Activated CD4-positive, alpha-beta T cell treated with anti-CD3 and anti-CD28 coated beads for 36 hours (primary cell): ENCODE measurements at regions of chr20 and their contacts with region 1.

Region 1: DNA sequence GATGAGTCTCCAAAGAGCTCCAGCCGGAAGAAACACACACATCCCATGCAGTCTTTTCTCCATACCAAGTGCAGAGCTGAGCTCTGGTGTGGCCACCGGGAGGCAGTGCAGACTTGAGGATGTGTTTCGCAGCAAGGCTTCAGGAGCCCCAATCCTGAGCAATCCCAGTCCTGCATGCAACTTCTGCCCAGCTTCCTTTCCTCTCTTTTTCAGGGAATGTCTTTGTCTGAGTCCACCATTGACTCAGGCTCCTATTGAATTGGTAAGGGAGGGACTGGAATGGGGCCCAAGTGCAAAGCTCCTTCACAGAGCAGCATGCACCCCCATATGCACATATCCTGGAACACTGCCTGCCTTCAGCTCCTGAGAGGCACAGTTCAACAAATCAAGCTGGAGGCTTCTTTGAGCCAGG is 50.5 kb upstream of the ASIP start:
- DNase-seq: peak; percentile 73
- ATAC-seq: peak; percentile 74
- H3K4me3 Mint-ChIP-seq: no peak overlapping the region
- H3K27ac Mint-ChIP-seq: no peak overlapping the region
- H3K4me1 Mint-ChIP-seq: no peaks in the 10 kb centered on the region
- H3K27me3 Mint-ChIP-seq: peaks cover 9% of the 10 kb centered on the region

Region 2: DNA sequence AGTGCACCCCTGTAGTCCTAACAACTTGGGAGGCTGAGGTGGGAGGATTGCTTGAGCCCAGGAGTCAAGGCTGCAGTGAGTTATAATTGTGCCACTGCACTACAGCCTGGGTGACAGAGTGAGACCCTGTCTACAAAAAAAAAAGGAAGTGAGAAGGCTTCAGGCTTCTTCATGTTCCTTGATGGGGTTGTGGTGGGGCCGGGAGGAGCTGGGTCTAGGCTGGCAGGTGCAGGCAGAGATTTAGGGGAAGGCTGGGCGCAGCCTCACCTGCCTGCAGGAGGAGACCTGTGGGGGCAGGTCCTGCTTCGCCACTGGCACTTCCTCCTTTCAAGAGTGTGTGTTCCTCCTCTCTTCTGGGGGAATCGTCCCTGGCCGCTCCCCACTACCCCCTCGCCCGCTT is 315.6 kb before region 1 on chr20:
- CTCF ChIA-PET with region 1: no interaction called
- POLR2A ChIA-PET with region 1: no interaction called
- intact Hi-C with region 1: no loop called
- DNase-seq: no peak
- ATAC-seq: no peak
- H3K4me3 Mint-ChIP-seq: no peak overlapping the region
- H3K27ac Mint-ChIP-seq: no peak overlapping the region
- H3K4me1 Mint-ChIP-seq: no peaks in the 10 kb centered on the region
- H3K27me3 Mint-ChIP-seq: no peaks in the 10 kb centered on the region

Region 3: GRCh38 chr20:34141294-34141693 is 49.4 kb before region 1 on chr20:
- CTCF ChIA-PET with region 1: no interaction called
- POLR2A ChIA-PET with region 1: no interaction called
- intact Hi-C with region 1: no loop called
- DNase-seq: no peak
- ATAC-seq: no peak
- H3K4me3 Mint-ChIP-seq: no peak overlapping the region
- H3K27ac Mint-ChIP-seq: no peak overlapping the region
- H3K4me1 Mint-ChIP-seq: no peaks in the 10 kb centered on the region
- H3K27me3 Mint-ChIP-seq: peaks cover 5% of the 10 kb centered on the region

Region 4: DNA sequence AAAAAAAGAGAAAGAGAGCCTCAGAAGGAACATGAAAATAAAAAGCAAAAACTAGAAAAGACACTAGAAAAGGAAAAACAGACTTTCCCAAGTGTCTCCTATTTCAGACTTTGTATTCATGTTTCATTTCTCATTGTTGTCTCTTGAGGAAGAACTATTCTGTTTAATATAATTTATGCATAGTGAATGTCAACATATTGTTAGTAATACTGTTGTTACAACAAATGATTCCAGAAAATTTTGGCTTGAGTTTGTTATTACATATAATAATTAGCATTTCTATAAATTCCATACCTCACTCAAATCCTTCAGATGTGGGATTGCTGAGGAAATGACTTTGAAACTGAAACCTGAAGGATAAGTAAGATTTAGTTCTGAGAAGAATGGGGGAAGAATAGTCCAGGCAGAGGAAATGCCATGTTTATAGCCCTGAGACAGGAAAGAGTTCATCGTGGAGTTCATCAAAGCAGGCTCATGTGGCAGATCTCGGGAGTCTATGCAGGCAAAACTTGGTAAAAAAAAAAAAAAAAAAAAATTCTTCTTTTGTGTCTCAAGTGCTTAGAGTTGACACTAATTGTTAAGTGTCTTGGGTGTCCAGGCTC is 25.6 kb before region 1 on chr20:
- CTCF ChIA-PET with region 1: no interaction called
- POLR2A ChIA-PET with region 1: interaction called, 10 read pairs
- intact Hi-C with region 1: no loop called
- DNase-seq: no peak
- ATAC-seq: no peak
- H3K4me3 Mint-ChIP-seq: no peak overlapping the region
- H3K27ac Mint-ChIP-seq: no peak overlapping the region
- H3K4me1 Mint-ChIP-seq: peaks cover 2% of the 10 kb centered on the region
- H3K27me3 Mint-ChIP-seq: no peaks in the 10 kb centered on the region

Region 5: DNA sequence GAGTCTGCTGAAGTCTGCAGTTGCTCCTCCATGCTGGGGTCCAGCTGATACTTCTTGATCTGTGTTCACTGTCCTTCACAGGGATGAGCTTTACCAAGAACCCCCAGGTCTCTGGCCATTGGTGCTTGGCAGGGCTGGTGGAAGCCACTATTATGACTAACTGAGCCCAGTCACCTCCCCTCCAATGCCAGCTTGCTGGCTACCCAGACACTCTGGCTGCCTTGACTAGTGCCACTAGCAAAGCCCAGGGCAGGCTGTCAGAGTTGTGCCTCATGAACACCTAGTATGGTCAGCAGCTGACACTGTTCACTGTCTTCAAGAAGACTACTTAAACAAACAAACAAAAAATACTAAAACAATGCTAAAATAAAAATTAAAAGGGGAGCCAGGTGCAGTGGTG is 59.3 kb after region 1 on chr20:
- CTCF ChIA-PET with region 1: interaction called, 4 read pairs
- POLR2A ChIA-PET with region 1: no interaction called
- intact Hi-C with region 1: loop called in 1 of 2 experiments (anchors 5 kb)
- DNase-seq: no peak
- ATAC-seq: no peak
- H3K4me3 Mint-ChIP-seq: no peak overlapping the region
- H3K27ac Mint-ChIP-seq: no peak overlapping the region
- H3K4me1 Mint-ChIP-seq: peaks cover 22% of the 10 kb centered on the region
- H3K27me3 Mint-ChIP-seq: no peaks in the 10 kb centered on the region